GM12878 (cell line): ENCODE measurements at regions of chr2 and their contacts with region 1.

Region 1: DNA sequence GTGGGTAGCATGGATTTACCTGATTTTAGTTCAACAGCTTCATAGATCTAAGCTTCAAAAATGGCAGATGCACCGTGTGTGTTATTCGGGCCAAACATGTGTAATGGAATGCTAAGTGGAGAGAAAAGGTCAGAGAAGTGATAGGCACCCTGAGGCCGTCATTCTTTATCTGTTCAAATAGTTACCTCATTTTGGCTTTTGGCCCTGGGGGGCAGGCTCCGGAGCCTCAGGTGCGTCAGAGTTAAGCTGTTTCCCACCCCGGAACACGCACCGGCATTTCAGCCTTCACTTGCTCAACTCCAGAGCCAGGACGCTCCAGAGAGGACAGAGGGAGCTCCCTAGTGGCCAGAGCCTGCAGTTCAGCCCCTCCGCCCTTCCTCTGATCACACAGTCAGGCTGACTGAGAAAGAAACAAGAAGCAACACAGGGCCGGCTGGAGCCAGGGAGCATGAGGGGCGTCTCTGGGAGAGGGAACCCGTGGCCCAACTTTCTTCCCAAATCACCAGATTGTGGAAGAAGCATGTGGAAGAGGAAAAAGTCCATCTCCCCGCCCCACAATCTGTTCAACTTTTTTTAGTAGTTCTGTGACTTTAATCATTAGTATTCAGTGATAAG is 135.2 kb upstream of the EPC2 start:
- DNase-seq: peak; percentile 59
- ATAC-seq: peak; percentile 100
- H3K4me3 ChIP-seq: no peak overlapping the region
- H3K27ac ChIP-seq: no peak overlapping the region
- H3K4me1 ChIP-seq: no peaks in the 10 kb centered on the region
- H3K27me3 ChIP-seq: no peaks in the 10 kb centered on the region
- CTCF ChIP-seq: peak; percentile 97 to 99 (median 99); a peak in 5 of 6 replicates
- EP300 ChIP-seq: no peak
- POLR2A ChIP-seq: no peak
- RAD21 ChIP-seq: peak; percentile 99

Region 2: GRCh38 chr2:147937744-147938349 is 571.5 kb before region 1 on chr2:
- CTCF ChIA-PET with region 1: interaction called, 52 read pairs
- POLR2A ChIA-PET with region 1: no interaction called
- RAD21 ChIA-PET with region 1: interaction called, 21 read pairs
- SMC1A ChIA-PET with region 1: interaction called, 48 read pairs
- in situ Hi-C with region 1: no loop called
- intact Hi-C with region 1: loop called (anchors 1 kb)
- DNase-seq: no peak
- ATAC-seq: peak; percentile 77
- H3K4me3 ChIP-seq: no peak overlapping the region
- H3K27ac ChIP-seq: no peak overlapping the region
- H3K4me1 ChIP-seq: no peaks in the 10 kb centered on the region
- H3K27me3 ChIP-seq: no peaks in the 10 kb centered on the region
- CTCF ChIP-seq: peak; percentile 75 to 80 (median 79)
- EP300 ChIP-seq: no peak
- POLR2A ChIP-seq: no peak
- RAD21 ChIP-seq: peak; percentile 78

Region 3: DNA sequence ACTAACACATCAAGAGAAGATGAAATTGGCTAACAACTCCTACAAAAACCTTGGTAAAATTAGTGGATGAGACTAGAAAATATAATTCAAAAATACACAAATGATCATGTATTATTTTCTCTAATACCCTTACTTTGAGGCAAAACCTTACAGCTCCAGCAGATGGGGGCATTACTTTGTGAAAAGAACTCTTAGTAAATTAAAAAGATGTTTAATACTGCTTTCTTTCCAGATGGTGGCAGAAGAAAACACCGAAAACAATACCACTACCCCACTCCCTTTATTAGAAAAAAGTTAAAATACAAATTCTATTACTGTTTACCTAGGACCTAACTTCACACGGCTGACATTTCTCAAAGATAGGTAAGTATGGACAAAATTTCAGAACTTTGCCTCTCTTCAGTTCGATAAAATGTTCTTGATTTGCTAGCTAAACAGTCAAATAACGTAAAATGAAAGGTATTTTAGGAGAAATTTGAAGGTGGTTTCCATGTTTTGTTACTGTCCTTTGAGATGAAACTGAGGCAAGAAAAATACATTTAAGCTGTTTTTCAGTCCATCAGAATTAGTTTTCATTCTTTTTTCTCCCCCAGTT is 519.5 kb before region 1 on chr2:
- CTCF ChIA-PET with region 1: interaction called, 275 read pairs
- POLR2A ChIA-PET with region 1: interaction called, 5 read pairs
- RAD21 ChIA-PET with region 1: interaction called, 184 read pairs
- SMC1A ChIA-PET with region 1: interaction called, 145 read pairs
- in situ Hi-C with region 1: loop called (anchors 5 kb)
- intact Hi-C with region 1: loop called (anchors 1 kb)
- DNase-seq: peak; percentile 31
- ATAC-seq: peak; percentile 91
- H3K4me3 ChIP-seq: no peak overlapping the region
- H3K27ac ChIP-seq: no peak overlapping the region
- H3K4me1 ChIP-seq: peaks cover 3% of the 10 kb centered on the region; the same call in 1 of the 2 replicates
- H3K27me3 ChIP-seq: no peaks in the 10 kb centered on the region
- CTCF ChIP-seq: peak; percentile 47 to 93 (median 64); a peak in 4 of 6 replicates
- EP300 ChIP-seq: no peak
- POLR2A ChIP-seq: no peak
- RAD21 ChIP-seq: peak; percentile 95

Region 4: DNA sequence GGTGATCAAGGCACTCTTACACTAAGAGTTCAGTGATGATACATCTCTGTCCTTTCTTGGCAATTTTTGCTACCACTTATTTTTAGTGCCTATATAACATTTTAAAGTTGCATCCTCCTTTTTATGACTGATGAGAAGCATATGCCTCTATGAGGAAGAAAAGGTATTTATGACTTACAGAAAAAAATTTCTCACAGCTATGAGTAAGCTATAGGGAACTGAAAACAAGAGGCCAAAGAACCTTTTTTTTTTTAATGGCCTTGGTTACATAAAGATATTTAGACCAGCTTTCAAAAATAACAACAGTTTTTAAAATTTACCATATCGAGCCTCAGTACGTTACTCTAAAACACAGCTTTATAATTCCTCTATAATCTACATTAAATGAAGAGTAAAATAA is 467.2 kb before region 1 on chr2:
- CTCF ChIA-PET with region 1: interaction called, 6 read pairs
- POLR2A ChIA-PET with region 1: no interaction called
- RAD21 ChIA-PET with region 1: interaction called, 12 read pairs
- SMC1A ChIA-PET with region 1: interaction called, 5 read pairs
- in situ Hi-C with region 1: no loop called
- intact Hi-C with region 1: no loop called
- DNase-seq: no peak
- ATAC-seq: peak; percentile 89
- H3K4me3 ChIP-seq: 0 out of 2 replicates have a peak overlapping the region, but pooled peaks have one; percentile 8
- H3K27ac ChIP-seq: peak overlapping the region; percentile 61
- H3K4me1 ChIP-seq: peaks cover 23% of the 10 kb centered on the region
- H3K27me3 ChIP-seq: no peaks in the 10 kb centered on the region
- CTCF ChIP-seq: no peak
- EP300 ChIP-seq: peak; percentile 76 to 83
- POLR2A ChIP-seq: no peak
- RAD21 ChIP-seq: 0 out of 2 replicates have a peak, but pooled peaks have one; percentile 4

Region 5: DNA sequence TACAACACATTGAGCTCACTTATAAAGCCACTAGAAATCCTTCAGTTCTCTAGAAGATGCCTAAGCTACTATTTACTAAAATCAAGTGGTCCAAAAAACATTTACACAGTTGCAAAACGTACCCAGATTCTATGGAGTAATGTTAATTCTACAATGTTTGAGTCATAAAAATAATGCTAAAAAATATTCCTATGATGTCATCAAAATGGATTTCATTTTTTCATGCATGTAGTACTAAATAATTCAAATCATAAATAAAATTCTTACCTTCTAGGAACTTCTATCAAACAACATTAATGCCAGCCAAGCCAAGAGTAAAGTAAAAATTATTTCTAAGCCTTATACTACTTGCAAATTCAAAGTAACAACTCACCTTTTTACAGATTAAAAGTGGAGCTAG is 33.8 kb before region 1 on chr2:
- CTCF ChIA-PET with region 1: interaction called, 11 read pairs
- POLR2A ChIA-PET with region 1: no interaction called
- RAD21 ChIA-PET with region 1: no interaction called
- SMC1A ChIA-PET with region 1: interaction called, 14 read pairs
- in situ Hi-C with region 1: no loop called
- intact Hi-C with region 1: no loop called
- DNase-seq: no peak
- ATAC-seq: no peak
- H3K4me3 ChIP-seq: no peak overlapping the region
- H3K27ac ChIP-seq: no peak overlapping the region
- H3K4me1 ChIP-seq: no peaks in the 10 kb centered on the region
- H3K27me3 ChIP-seq: no peaks in the 10 kb centered on the region
- CTCF ChIP-seq: no peak
- EP300 ChIP-seq: no peak
- POLR2A ChIP-seq: no peak
- RAD21 ChIP-seq: no peak

Region 6: GRCh38 chr2:148524519-148524919 is 15.1 kb after region 1 on chr2:
- CTCF ChIA-PET with region 1: interaction called, 18 read pairs
- POLR2A ChIA-PET with region 1: no interaction called
- RAD21 ChIA-PET with region 1: interaction called, 5 read pairs
- SMC1A ChIA-PET with region 1: interaction called, 9 read pairs
- in situ Hi-C with region 1: no loop called
- intact Hi-C with region 1: no loop called
- DNase-seq: no peak
- ATAC-seq: peak; percentile 24; the same call in 1 of the 3 replicates
- H3K4me3 ChIP-seq: no peak overlapping the region
- H3K27ac ChIP-seq: no peak overlapping the region
- H3K4me1 ChIP-seq: peaks cover 7% of the 10 kb centered on the region
- H3K27me3 ChIP-seq: no peaks in the 10 kb centered on the region
- CTCF ChIP-seq: no peak
- EP300 ChIP-seq: no peak
- POLR2A ChIP-seq: no peak
- RAD21 ChIP-seq: no peak

Region 7: DNA sequence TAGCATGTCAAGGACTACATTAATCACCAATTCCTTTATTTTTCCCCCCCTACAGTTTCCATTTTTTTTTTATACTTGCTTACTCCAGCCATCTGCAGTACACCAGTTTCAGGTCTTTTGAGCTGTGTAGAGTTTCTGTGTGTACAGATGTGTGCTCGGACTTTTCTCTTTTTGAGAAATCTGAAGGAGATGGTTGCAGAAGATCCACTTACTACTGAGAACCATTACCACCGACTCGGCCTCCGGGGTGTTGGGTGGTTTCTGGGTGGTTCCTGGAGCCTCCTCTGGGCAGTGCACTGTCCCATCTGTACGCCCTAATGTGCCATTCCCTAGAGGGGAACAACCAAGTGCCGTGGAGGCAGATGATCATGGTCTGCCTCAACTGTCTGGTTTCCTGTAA is 513.7 kb after region 1 on chr2:
- CTCF ChIA-PET with region 1: no interaction called
- POLR2A ChIA-PET with region 1: no interaction called
- RAD21 ChIA-PET with region 1: no interaction called
- SMC1A ChIA-PET with region 1: no interaction called
- in situ Hi-C with region 1: no loop called
- intact Hi-C with region 1: no loop called
- DNase-seq: no peak
- ATAC-seq: no peak
- H3K4me3 ChIP-seq: no peak overlapping the region
- H3K27ac ChIP-seq: peak overlapping the region; percentile 99
- H3K4me1 ChIP-seq: peaks cover 46% of the 10 kb centered on the region
- H3K27me3 ChIP-seq: no peaks in the 10 kb centered on the region
- CTCF ChIP-seq: no peak
- EP300 ChIP-seq: no peak
- POLR2A ChIP-seq: no peak
- RAD21 ChIP-seq: no peak